ENCODE measurements at regions of chr11 and their contacts with region 1.

Region 1: GRCh38 chr11:18540207-18541009 is 13.7 kb upstream of the TSG101 start:
- DNase-seq: peak; percentile 16
- H3K4me3 ChIP-seq: no peak overlapping the region
- H3K27ac ChIP-seq: no peak overlapping the region
- H3K4me1 ChIP-seq: no peaks in the 10 kb centered on the region
- H3K27me3 ChIP-seq: no peaks in the 10 kb centered on the region
- CTCF ChIP-seq: peak; percentile 37 to 57

Region 2: DNA sequence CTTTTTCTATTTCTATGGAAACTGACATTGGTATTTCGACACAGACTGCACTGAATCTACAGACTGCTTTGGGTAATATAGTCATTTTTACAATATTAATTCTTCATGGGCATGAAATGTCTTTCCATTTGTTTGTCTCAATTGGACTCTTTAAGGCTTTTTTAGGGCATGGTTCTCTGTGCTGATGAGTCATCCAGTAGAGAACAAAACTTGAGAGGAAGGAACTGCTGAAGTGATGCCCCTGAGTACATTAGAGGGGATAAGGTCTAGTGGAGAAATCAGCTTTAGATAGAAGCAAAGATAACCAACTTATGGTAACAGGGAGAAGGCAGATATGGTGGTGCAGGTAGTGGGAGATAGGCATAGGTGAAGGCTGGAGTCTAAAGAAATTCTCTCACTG is 38.8 kb before region 1 on chr11:
- CTCF ChIA-PET with region 1: no interaction called
- dilution Hi-C with region 1: no loop called
- in situ Hi-C with region 1: no loop called
- intact Hi-C with region 1: no loop called
- DNase-seq: no peak
- H3K4me3 ChIP-seq: no peak overlapping the region
- H3K27ac ChIP-seq: no peak overlapping the region
- H3K4me1 ChIP-seq: no peaks in the 10 kb centered on the region
- H3K27me3 ChIP-seq: no peaks in the 10 kb centered on the region
- CTCF ChIP-seq: no peak

Region 3: GRCh38 chr11:18650859-18651557 is 110.6 kb after region 1 on chr11:
- CTCF ChIA-PET with region 1: interaction called, 11 read pairs
- dilution Hi-C with region 1: no loop called
- in situ Hi-C with region 1: no loop called
- intact Hi-C with region 1: loop called (anchors 1 kb)
- DNase-seq: no peak
- H3K4me3 ChIP-seq: no peak overlapping the region
- H3K27ac ChIP-seq: no peak overlapping the region
- H3K4me1 ChIP-seq: no peaks in the 10 kb centered on the region
- H3K27me3 ChIP-seq: no peaks in the 10 kb centered on the region
- CTCF ChIP-seq: peak; percentile 50 to 69

Region 4: GRCh38 chr11:18731949-18732821 is 191.8 kb after region 1 on chr11:
- CTCF ChIA-PET with region 1: interaction called, 5 read pairs
- dilution Hi-C with region 1: no loop called
- in situ Hi-C with region 1: loop called (anchors 10 kb)
- intact Hi-C with region 1: loop called (anchors 1 kb)
- DNase-seq: peak; percentile 24
- H3K4me3 ChIP-seq: no peak overlapping the region
- H3K27ac ChIP-seq: no peak overlapping the region
- H3K4me1 ChIP-seq: no peaks in the 10 kb centered on the region
- H3K27me3 ChIP-seq: no peaks in the 10 kb centered on the region
- CTCF ChIP-seq: peak; percentile 97 to 99

Region 5: GRCh38 chr11:18768472-18768901 is 228.1 kb after region 1 on chr11:
- CTCF ChIA-PET with region 1: interaction called, 3 read pairs
- dilution Hi-C with region 1: no loop called
- in situ Hi-C with region 1: no loop called
- intact Hi-C with region 1: loop called (anchors 1 kb)
- DNase-seq: no peak
- H3K4me3 ChIP-seq: no peak overlapping the region
- H3K27ac ChIP-seq: no peak overlapping the region
- H3K4me1 ChIP-seq: peaks cover 9% of the 10 kb centered on the region
- H3K27me3 ChIP-seq: no peaks in the 10 kb centered on the region
- CTCF ChIP-seq: no peak

Measured in mammary epithelial cell (primary cell).